SK-N-SH (cell line): ENCODE measurements at regions of chr1 and their contacts with region 1.

Region 1: GRCh38 chr1:34786521-34787325 is 5.7 kb downstream of the GJB3 start:
- DNase-seq: peak; percentile 86
- H3K4me3 ChIP-seq: no peak overlapping the region
- H3K27ac ChIP-seq: no peak overlapping the region
- H3K4me1 ChIP-seq: peaks cover 0 to 2% of the 10 kb centered on the region in 2 experiments; a peak in 1 of 4 replicates
- H3K27me3 ChIP-seq: peaks cover 10% of the 10 kb centered on the region
- CTCF ChIP-seq: peak; percentile 80
- EP300 ChIP-seq: no peak
- RAD21 ChIP-seq: peak; percentile 95

Region 2: GRCh38 chr1:34796990-34797389 is 10.3 kb after region 1 on chr1:
- CTCF ChIA-PET with region 1: interaction called, 14 read pairs
- POLR2A ChIA-PET with region 1: no interaction called
- DNase-seq: no peak
- H3K4me3 ChIP-seq: no peak overlapping the region
- H3K27ac ChIP-seq: no peak overlapping the region
- H3K4me1 ChIP-seq: no peaks in the 10 kb centered on the region
- H3K27me3 ChIP-seq: no peaks in the 10 kb centered on the region
- CTCF ChIP-seq: no peak
- EP300 ChIP-seq: no peak
- RAD21 ChIP-seq: no peak

Region 3: DNA sequence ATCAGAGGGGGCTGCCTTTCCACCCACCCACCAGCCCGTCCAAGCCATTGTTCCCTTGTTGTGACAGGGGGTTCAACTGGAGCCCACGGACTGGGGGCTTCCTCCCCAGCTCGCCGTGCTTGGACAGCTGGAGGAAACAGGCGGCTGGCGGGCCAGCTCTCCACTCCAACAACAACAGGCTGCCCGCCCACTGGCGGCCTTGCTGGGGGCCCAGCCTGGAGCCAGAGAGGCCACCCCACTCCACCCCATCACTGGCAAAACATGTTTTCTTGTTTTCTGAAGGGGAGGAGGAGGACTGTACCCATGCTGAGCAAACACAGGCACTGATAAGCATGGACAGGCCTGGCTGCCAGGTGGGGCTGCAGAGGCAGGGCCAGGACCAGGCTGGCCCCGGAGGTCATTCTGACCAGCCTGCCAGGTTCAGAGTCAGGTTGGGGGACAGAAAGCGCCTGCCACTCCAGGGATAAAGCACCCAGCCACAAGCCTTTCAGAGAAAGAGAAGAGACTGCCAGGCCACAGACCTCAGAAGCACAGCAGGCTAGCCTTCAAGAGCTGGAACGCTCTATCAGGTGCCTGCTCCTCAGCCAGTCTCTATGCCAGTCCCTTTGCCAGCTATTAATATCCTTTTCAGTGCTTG is 38.9 kb after region 1 on chr1:
- CTCF ChIA-PET with region 1: interaction called, 17 read pairs
- POLR2A ChIA-PET with region 1: interaction called, 3 read pairs
- DNase-seq: peak; percentile 86
- H3K4me3 ChIP-seq: no peak overlapping the region; a peak in 1 of 4 replicates
- H3K27ac ChIP-seq: peak overlapping the region in 1 of 2 experiments; percentile 95; a peak in 2 of 4 replicates
- H3K4me1 ChIP-seq: peaks cover 0 to 33% of the 10 kb centered on the region in 2 experiments; a peak in 2 of 4 replicates
- H3K27me3 ChIP-seq: no peaks in the 10 kb centered on the region
- CTCF ChIP-seq: no peak
- EP300 ChIP-seq: peak in 1 of 2 experiments; percentile 84; a peak in 2 of 4 replicates
- RAD21 ChIP-seq: peak; percentile 3; the same call in 1 of the 2 replicates

Region 4: GRCh38 chr1:34831721-34832246 is 45.1 kb after region 1 on chr1:
- CTCF ChIA-PET with region 1: interaction called, 17 read pairs
- POLR2A ChIA-PET with region 1: interaction called, 3 read pairs
- DNase-seq: peak; percentile 54
- H3K4me3 ChIP-seq: no peak overlapping the region
- H3K27ac ChIP-seq: 0 out of 4 replicates have a peak overlapping the region, but pooled peaks of 1 of the 2 experiments have one; percentile 35
- H3K4me1 ChIP-seq: peaks cover 0 to 26% of the 10 kb centered on the region in 2 experiments; a peak in 1 of 4 replicates
- H3K27me3 ChIP-seq: no peaks in the 10 kb centered on the region
- CTCF ChIP-seq: no peak
- EP300 ChIP-seq: peak in 1 of 2 experiments; percentile 11; a peak in 1 of 4 replicates
- RAD21 ChIP-seq: no peak

Region 5: DNA sequence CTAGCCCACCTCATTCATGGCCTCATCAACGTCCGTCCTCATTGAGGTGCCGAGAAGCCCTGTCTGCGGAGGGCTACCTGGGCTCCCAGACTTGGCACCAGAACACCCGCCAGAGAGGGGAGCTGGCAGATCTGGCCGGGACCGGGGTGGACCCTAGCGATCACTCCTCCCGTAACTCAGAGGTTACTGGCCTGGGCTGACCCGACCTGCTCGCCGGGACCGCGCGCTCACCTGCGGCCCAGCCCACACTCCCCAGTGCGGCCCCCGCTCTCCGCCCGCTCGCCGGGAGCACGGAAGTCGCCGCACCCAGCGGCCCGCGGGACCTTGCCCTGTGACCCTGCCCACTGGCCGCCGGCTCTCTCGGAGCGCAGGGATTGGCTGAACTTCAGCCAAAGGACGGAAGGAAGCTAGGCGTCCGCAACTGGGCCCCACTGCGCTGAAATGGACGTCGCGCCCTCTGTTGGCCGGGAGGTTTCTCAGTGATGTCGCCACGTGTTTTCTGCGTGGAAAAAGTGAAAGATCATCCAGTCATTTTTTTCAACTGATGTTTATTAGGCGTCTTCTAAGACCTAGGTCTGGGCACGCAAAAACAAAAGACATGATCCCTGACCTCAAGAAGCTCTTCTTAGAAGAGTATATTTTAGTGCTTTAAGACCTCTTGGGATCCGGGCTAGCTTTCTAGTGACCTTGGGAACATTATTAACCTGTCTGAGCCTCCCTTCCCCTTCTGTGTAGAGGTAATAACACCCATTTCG is 72.9 kb after region 1 on chr1 and contains the start of gene SMIM12:
- CTCF ChIA-PET with region 1: interaction called, 170 read pairs
- POLR2A ChIA-PET with region 1: interaction called, 5 read pairs
- DNase-seq: peak; percentile 99
- H3K4me3 ChIP-seq: peak within 1 kb of the TSS; percentile 88 to 100
- H3K27ac ChIP-seq: peak within 1 kb of the TSS; percentile 50 to 69; a peak in 3 of 4 replicates
- H3K4me1 ChIP-seq: peaks cover 9 to 16% of the 10 kb centered on the region in 2 experiments; a peak in 3 of 4 replicates
- H3K27me3 ChIP-seq: no peaks in the 10 kb centered on the region
- CTCF ChIP-seq: peak; percentile 90
- EP300 ChIP-seq: no peak
- RAD21 ChIP-seq: peak; percentile 39
- polyA plus RNA-seq, gene SMIM12: 42.3 and 46.7 TPM in 2 replicates

Region 6: DNA sequence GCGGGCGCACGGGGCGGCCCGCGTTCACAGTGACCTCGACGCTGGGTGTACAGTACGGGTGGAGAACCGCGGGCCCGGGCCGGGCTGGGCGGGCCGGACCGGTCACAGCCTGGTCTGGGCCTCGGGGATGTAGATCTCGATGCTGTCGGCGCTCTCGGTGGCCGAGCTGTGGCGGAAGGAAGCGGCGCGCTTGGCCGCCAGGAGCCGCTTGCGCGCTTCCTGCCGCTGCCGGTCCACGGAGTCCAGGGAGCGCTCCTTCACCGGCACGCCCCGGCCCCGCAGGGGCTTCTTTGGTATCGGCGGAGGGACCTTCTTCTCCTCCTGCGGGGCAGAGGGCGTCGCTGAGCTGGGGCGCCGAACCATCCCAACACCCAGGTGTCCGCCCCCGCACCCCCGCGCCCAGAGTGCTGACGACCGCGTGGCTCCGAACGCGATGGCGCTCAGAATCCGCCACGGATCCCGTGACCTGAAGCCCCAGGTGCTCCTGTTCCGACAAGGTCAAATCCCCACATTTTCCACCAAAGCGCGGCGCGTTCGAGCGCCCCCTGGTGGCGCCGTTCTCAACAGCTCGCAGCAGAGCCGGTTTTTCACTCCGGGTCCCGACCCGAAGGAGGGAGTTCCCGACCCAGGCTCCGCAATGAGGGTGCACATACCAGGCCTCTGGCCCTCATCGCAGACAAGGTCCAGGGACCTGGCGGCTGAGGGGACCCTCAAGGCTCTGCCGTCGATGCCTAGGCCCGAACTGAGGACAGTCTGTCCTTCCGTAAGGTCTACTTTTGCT is 79.4 kb after region 1 on chr1:
- CTCF ChIA-PET with region 1: interaction called, 26 read pairs
- POLR2A ChIA-PET with region 1: no interaction called
- DNase-seq: peak; percentile 87
- H3K4me3 ChIP-seq: peak overlapping the region; percentile 14 to 54; a peak in 3 of 4 replicates
- H3K27ac ChIP-seq: no peak overlapping the region
- H3K4me1 ChIP-seq: peaks cover 0 to 3% of the 10 kb centered on the region in 2 experiments; a peak in 1 of 4 replicates
- H3K27me3 ChIP-seq: no peaks in the 10 kb centered on the region
- CTCF ChIP-seq: peak; percentile 84
- EP300 ChIP-seq: no peak
- RAD21 ChIP-seq: peak; percentile 43